Dendritic cell treated with granulocyte-macrophage colony-stimulating factor and Interleukin-4, amounts not matched to agents 40 ng/mL and 50 ng/mL, for 4 days (primary cell): ENCODE measurements at regions of chr10 and their contacts with region 1.

Region 1: GRCh38 chr10:52308251-52309031 is 5.6 kb upstream of the DKK1 start:
- H3K4me3 Mint-ChIP-seq: peak overlapping the region; percentile 56
- H3K27ac Mint-ChIP-seq: no peak overlapping the region
- H3K4me1 Mint-ChIP-seq: peaks cover 15% of the 10 kb centered on the region
- H3K27me3 Mint-ChIP-seq: peaks cover 41% of the 10 kb centered on the region

Region 2: GRCh38 chr10:52187521-52188258 is 120.8 kb before region 1 on chr10:
- intact Hi-C with region 1: no loop called
- H3K4me3 Mint-ChIP-seq: no peak overlapping the region
- H3K27ac Mint-ChIP-seq: no peak overlapping the region
- H3K4me1 Mint-ChIP-seq: no peaks in the 10 kb centered on the region
- H3K27me3 Mint-ChIP-seq: no peaks in the 10 kb centered on the region

Region 3: GRCh38 chr10:52488606-52489485 is 180.4 kb after region 1 on chr10:
- intact Hi-C with region 1: loop called (anchors 1 kb)
- H3K4me3 Mint-ChIP-seq: no peak overlapping the region
- H3K27ac Mint-ChIP-seq: no peak overlapping the region
- H3K4me1 Mint-ChIP-seq: no peaks in the 10 kb centered on the region
- H3K27me3 Mint-ChIP-seq: no peaks in the 10 kb centered on the region

Region 4: DNA sequence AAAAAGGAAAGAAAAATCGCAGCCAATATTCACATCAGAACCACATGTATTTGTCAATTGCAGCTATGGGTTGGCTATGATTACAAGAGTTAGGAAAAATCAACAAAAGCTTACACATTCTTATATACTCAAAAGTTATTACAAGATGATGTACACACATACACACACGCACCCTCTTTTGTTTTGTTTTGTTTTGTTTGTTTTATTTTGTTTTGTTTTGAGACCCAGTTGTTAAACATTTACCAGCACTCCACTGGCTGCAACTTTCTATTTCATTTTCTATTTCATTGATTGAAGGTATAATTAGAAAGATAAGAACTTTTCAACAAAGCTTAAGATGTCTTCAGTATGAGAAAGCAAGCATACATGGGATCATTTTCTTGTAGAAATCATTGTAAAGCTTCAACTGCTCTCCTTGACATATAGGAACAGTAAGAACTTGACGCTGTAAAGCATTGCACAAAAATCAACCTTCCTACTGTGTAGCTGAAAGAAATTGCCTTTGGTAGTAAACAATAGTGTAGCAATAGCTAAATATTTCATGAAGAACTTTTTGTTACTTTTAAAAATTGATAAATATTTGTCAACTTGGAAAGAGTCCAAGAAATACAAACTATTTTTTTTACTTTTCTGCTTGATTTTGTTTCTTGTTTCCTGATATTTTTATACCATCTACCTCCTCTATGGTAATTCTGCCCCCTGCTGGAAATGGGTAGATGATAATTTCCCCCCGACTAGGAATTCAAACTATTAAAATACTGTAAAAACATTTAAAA is 258.2 kb after region 1 on chr10:
- intact Hi-C with region 1: loop called (anchors 5 kb)
- H3K4me3 Mint-ChIP-seq: no peak overlapping the region
- H3K27ac Mint-ChIP-seq: no peak overlapping the region
- H3K4me1 Mint-ChIP-seq: no peaks in the 10 kb centered on the region
- H3K27me3 Mint-ChIP-seq: no peaks in the 10 kb centered on the region